ENCODE measurements at regions of chr2 and their contacts with region 1.

Region 1: DNA sequence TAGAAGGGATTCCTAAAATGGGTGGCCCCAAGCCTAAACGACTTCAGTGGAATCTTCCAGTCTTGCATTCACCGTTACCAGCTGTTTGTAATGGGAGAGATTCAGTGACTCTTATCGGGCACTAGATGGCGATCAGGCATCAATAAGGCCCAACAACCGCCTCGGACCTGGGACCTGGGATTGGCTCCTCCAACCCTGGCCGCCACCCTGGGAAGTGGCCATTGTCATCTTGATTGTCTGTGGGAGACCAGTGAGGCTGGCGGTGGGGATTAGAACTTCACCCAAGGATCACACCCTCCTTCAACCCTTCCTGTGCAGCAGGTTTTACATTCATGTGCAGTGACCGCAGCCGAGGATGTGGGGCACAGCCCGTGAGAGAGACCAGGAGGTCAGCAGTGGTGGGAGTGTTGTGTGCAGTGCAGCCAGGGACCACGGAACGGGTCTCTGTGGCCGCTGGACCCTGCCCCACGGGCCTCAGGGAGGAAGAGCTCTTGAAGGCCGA is 85.3 kb downstream of the SPP2 start:
- DNase-seq: peak; percentile 41 to 79
- ATAC-seq: peak; percentile 50 to 74 (median 73)
- H3K4me3 ChIP-seq: no peak overlapping the region
- H3K4me3 Mint-ChIP-seq: peak overlapping the region; percentile 83
- H3K27ac ChIP-seq: peak overlapping the region; percentile 57
- H3K27ac Mint-ChIP-seq: peak overlapping the region; percentile 72 to 88
- H3K4me1 ChIP-seq: peaks cover 50% of the 10 kb centered on the region
- H3K4me1 Mint-ChIP-seq: peaks cover 41 to 43% of the 10 kb centered on the region in 2 donors
- H3K27me3 ChIP-seq: no peaks in the 10 kb centered on the region
- H3K27me3 Mint-ChIP-seq: no peaks in the 10 kb centered on the region
- CTCF ChIP-seq: peak; percentile 76

Region 2: DNA sequence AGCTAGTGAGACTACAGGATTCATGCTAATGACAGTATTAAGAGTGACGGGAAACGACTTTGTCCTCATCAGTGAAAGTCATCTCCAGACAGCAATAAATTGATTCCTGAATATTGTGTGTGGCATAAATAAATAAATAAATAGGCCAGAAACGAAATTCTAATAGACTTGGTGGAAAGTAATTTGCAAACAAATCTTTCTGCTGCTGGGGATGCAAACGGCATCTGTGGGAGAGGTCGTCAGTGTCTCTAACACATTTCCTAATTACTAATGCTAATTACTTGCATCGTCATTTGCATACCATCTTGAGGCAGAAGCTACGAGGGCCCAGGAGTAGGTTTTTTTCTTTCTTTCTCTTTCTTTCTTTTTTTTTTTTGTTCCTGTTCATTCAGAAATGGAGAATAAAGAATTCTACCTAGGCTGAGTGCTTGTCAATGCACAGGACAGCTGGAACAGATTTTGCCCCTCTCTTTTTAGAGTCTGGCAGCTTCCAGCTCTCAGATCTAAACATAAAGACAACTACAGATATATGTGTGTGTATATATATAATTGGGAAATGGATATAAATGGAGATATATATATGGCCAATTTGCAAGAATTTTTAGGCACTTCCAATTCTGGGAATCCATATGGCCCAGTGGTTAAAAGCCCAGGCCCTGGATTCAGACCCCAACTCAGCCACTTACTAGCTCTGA is 10.2 kb before region 1 on chr2:
- intact Hi-C with region 1: no loop called
- DNase-seq: no peak
- ATAC-seq: no peak
- H3K4me3 ChIP-seq: no peak overlapping the region
- H3K4me3 Mint-ChIP-seq: no peak overlapping the region
- H3K27ac ChIP-seq: no peak overlapping the region
- H3K27ac Mint-ChIP-seq: no peak overlapping the region
- H3K4me1 ChIP-seq: peaks cover 12% of the 10 kb centered on the region
- H3K4me1 Mint-ChIP-seq: peaks cover 7 to 20% of the 10 kb centered on the region in 2 donors
- H3K27me3 ChIP-seq: no peaks in the 10 kb centered on the region
- H3K27me3 Mint-ChIP-seq: no peaks in the 10 kb centered on the region
- CTCF ChIP-seq: no peak

Region 3: DNA sequence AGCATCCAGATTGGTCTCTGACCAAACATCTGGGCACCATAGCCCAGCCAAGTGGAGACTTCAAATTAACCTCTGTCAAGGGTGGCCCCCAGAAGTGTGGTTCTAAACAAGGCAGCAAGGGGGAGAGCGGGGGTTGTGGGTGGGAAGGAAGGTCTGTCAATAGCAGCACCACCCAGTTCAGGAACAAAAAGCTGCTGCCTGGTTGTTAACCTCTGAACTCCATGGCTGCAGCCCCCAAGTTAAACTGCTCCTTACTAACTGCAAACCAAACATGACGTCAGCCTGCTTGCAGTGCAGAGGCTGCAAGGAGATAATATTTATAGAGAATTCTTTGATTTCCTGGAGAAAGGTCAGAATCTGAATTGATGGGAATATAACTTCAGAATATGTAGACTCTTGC is 284.6 kb after region 1 on chr2:
- intact Hi-C with region 1: loop called (anchors 2 kb)
- DNase-seq: peak in 1 of 2 donors; percentile 68
- ATAC-seq: peak; percentile 11 to 49 (median 41)
- H3K4me3 ChIP-seq: no peak overlapping the region
- H3K4me3 Mint-ChIP-seq: peak overlapping the region; percentile 61
- H3K27ac ChIP-seq: peak overlapping the region; percentile 98
- H3K27ac Mint-ChIP-seq: peak overlapping the region; percentile 98 to 100
- H3K4me1 ChIP-seq: peaks cover 56% of the 10 kb centered on the region
- H3K4me1 Mint-ChIP-seq: peaks cover 62 to 70% of the 10 kb centered on the region in 2 donors
- H3K27me3 ChIP-seq: no peaks in the 10 kb centered on the region
- H3K27me3 Mint-ChIP-seq: no peaks in the 10 kb centered on the region
- CTCF ChIP-seq: no peak

Region 4: DNA sequence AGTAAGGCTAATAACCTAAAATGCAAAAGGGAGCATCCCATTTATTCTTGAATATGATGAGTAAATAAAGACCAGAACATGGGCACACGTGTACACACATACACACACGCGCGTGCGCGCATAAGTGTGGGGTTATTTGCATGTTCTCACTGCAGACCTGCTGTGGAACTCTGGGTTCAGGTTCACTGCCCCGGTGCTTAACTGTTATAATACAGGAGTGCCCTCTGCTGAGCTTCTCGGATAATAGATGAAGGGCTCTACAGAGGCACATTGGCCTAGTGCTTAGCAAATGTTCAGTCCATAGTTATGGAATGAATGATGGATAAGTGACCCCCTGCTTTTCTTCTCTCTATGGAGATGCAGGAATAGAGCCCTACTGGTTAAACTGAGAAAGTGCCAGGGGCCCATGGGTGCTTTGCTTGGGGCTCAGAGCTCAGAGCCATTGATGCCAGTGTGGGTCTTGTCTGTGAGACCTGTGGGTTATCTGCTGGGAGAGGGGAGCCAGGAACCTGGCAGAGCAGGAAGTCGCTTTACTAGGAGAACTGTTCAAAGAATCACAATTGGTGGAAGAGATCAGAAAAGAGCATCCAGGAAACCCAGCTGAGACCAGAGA is 364.7 kb after region 1 on chr2:
- intact Hi-C with region 1: loop called (anchors 1 kb)
- DNase-seq: peak; percentile 47 to 90
- ATAC-seq: peak; percentile 39 to 62 (median 47)
- H3K4me3 ChIP-seq: no peak overlapping the region
- H3K4me3 Mint-ChIP-seq: peak overlapping the region; percentile 68
- H3K27ac ChIP-seq: no peak overlapping the region
- H3K27ac Mint-ChIP-seq: peak overlapping the region; percentile 91 to 95
- H3K4me1 ChIP-seq: peaks cover 26% of the 10 kb centered on the region
- H3K4me1 Mint-ChIP-seq: peaks cover 38% of the 10 kb centered on the region in 2 donors
- H3K27me3 ChIP-seq: no peaks in the 10 kb centered on the region
- H3K27me3 Mint-ChIP-seq: peaks cover 4 to 23% of the 10 kb centered on the region in 2 donors
- CTCF ChIP-seq: peak; percentile 71

Region 5: DNA sequence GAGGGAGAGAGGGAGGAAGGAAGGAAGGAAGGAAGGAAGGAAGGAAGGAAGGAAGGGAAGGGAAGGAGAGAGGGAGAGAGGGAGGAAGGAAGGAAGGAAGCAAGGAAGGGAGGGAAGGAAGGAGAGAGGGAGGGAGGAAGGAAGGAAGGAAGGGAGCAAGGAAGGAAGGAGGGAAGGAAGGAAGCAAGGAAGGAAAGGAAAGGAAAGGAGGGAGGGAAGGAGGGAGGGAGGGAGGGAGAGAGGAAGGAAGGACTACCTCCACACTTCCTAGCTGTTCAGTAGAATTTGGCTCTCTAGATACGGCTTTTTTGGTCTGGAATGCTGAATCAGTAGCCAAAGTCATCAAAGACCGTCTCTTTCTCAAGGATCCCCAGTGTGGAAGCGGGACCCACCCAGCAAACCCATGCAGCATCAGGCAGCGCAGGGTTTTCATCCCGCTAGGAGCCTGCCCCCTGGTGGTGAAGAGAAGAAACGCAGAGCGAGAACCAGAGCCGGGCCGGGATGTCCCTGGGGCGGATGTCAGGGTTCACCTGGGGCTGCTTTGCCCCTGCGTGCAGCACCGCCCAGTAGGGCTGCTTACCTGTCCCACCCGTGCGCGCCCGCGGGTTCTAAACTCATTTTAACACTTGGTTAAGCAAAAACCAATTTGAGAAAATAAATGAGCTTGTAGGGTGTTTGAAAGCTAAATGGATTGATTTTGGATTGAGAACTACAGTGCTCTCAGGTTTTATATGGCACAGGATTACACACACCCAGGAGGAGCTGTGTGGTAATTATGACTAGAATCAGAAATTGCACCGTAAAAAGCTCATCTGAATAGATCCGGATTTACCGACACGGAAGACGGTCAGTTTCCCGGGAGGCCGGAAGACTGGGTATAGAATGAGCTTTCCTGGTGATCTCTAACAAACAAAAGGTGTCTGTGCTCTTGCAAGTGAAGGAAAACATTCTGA is 409.2 kb after region 1 on chr2:
- intact Hi-C with region 1: loop called (anchors 1 kb)
- DNase-seq: peak; percentile 75 to 87
- ATAC-seq: peak; percentile 86 to 97 (median 97)
- H3K4me3 ChIP-seq: no peak overlapping the region
- H3K4me3 Mint-ChIP-seq: no peak overlapping the region
- H3K27ac ChIP-seq: no peak overlapping the region
- H3K27ac Mint-ChIP-seq: no peak overlapping the region
- H3K4me1 ChIP-seq: peaks cover 7% of the 10 kb centered on the region
- H3K4me1 Mint-ChIP-seq: peaks cover 5 to 14% of the 10 kb centered on the region in 2 donors
- H3K27me3 ChIP-seq: no peaks in the 10 kb centered on the region
- H3K27me3 Mint-ChIP-seq: peaks cover 25 to 43% of the 10 kb centered on the region in 2 donors
- CTCF ChIP-seq: peak; percentile 92

Measured in natural killer cell (primary cell).